GM10248 (cell line): ENCODE measurements at regions of chr9 and their contacts with region 1.

Region 1: DNA sequence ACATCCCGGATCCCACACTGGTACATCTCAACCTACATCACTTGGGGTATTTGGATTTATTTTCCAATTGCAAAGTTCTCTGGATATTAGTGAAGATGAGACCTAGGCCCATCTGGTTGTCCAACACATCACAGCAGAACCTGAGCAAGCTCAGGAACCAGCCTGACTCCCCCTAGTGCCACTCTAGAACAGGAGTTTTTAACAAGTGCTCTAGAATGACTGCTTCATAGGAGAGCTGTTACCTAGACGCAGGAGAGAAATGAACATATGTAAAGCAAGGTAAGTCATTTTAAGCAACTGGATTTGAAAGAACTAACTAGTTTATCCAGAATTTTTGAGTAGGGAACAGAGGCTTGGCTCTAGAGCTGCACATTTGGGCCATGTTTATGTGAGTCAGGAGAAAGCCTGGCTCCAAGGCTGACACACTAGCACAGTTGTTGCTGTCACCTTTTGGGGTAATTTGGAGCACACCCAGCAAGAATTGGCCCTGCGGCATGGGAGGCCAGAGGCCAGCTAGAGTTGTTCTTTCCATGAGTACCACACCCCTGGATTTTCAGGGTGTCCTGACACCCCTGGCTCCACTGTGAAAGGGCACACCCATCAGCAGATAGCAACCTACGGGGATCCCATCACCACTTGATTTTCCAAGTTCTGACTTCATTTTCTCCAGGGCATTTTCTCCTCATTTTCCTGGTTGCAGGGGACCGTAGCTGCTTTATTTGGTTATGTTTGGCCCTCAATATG is 110.9 kb upstream of the LPAR1 start:
- DNase-seq: no peak
- CTCF ChIP-seq: no peak

Region 2: GRCh38 chr9:111131211-111131610 is 18.0 kb before region 1 on chr9:
- CTCF ChIA-PET with region 1: interaction called, 13 read pairs
- POLR2A ChIA-PET with region 1: no interaction called
- DNase-seq: no peak
- CTCF ChIP-seq: no peak